H1 (cell line): ENCODE measurements at regions of chr10 and their contacts with region 1.

Region 1: DNA sequence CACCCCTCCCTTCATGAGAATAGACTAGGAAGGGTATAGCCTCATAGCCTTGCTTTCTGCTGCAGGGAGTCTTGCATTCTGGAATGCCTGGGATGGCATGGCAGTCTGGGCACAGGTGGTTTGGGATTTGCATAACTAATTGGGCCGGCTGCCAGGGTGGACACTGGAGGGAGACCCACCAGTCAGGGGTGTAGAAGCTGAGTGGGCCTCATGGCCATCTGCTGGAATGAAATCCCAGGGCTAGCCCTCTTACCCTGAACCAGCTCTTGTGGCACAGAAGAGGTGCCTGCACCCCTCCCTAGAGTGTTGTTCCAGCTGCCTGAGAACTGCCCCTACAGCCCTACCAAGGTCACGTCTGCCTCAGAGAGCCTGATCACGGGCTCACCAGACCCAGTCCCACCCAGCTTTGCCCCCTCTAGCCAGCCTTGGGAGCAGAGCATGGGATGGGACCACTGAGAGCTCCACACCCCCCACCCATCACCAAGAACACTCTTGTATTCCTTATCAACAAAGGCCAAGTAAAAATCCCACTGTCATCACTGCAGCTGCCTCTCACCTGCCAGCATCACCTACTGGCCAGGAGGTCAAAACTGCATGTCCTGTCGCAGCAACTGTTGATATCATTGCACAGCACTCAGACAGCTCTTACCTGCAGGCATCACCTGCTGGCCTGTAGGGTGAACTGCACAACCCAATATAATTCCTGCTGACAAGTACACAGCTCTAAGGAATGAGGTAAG is 148.9 kb downstream of the ZEB1 start:
- DNase-seq: peak; percentile 54 to 69
- H3K4me3 ChIP-seq: no peak overlapping the region
- H3K27ac ChIP-seq: no peak overlapping the region
- H3K4me1 ChIP-seq: no peaks in the 10 kb centered on the region; a peak in 2 of 7 replicates
- H3K27me3 ChIP-seq: no peaks in the 10 kb centered on the region
- CTCF ChIP-seq: peak; percentile 87 to 99 (median 97)
- EP300 ChIP-seq: no peak
- POLR2A ChIP-seq: no peak
- RAD21 ChIP-seq: peak; percentile 93 to 95

Region 2: DNA sequence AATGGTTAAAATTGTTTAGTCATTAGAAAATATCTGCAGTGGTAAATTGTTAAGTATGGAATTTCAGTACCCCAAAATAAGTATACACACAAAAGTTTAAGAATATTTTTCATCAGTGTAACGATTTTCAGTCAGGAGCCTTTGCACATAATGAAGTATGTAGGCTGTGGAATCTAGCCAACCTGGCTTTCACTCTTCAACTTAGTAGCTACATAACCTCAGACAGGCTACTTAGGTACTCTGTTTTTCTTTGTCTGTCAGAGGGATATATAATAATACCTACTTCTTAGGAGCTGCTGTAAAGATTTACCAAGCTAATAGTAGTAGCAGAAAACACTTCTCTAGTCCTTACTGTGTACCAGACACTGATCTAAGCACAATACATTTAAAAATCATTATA is 11.5 kb before region 1 on chr10:
- CTCF ChIA-PET with region 1: interaction called, 10 read pairs
- POLR2A ChIA-PET with region 1: no interaction called
- DNase-seq: no peak
- H3K4me3 ChIP-seq: no peak overlapping the region
- H3K27ac ChIP-seq: no peak overlapping the region
- H3K4me1 ChIP-seq: no peaks in the 10 kb centered on the region
- H3K27me3 ChIP-seq: no peaks in the 10 kb centered on the region
- CTCF ChIP-seq: no peak
- EP300 ChIP-seq: no peak
- POLR2A ChIP-seq: no peak
- RAD21 ChIP-seq: no peak

Region 3: DNA sequence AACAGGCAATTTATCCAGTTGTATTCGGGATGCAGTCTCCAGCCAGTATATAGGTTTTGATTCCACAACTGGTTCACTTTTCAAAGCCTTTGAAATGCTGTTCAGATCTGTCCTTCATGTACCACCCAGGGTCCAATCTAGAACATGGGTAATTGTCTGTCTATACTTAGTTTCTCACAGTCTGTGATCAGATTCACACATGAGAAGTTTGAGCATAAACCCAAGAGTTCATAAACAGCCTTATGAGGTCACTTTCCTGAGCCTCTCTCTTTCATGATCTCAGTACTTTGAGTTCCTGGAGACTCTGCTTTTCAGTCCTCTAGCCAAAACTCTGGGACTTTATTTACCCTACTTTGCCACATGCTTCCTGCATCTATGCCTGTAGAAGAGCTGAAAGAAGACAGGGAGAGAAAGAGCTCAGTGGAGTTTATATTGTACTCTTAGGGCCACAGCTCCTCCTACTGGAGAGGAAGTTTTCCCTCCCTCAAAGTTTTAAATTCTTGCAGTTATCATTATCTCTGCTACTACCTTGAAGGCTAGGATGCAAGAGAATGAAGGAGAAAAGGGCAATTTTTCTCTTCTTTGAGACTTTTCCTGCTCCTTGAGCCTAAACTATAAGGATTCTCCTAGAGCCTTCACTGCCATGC is 23.0 kb after region 1 on chr10:
- CTCF ChIA-PET with region 1: interaction called, 10 read pairs
- POLR2A ChIA-PET with region 1: no interaction called
- DNase-seq: peak in 1 of 2 experiments; percentile 49
- H3K4me3 ChIP-seq: no peak overlapping the region
- H3K27ac ChIP-seq: no peak overlapping the region
- H3K4me1 ChIP-seq: no peaks in the 10 kb centered on the region
- H3K27me3 ChIP-seq: no peaks in the 10 kb centered on the region
- CTCF ChIP-seq: peak in 2 of 3 experiments; percentile 66 to 76; a peak in 2 of 4 replicates
- EP300 ChIP-seq: no peak
- POLR2A ChIP-seq: no peak
- RAD21 ChIP-seq: peak; percentile 85 to 91